Activated naive CD4-positive, alpha-beta T cell treated with anti-CD3 and anti-CD28 coated beads for 36 hours (primary cell): ENCODE measurements at regions of chr11 and their contacts with region 1.

Region 1: DNA sequence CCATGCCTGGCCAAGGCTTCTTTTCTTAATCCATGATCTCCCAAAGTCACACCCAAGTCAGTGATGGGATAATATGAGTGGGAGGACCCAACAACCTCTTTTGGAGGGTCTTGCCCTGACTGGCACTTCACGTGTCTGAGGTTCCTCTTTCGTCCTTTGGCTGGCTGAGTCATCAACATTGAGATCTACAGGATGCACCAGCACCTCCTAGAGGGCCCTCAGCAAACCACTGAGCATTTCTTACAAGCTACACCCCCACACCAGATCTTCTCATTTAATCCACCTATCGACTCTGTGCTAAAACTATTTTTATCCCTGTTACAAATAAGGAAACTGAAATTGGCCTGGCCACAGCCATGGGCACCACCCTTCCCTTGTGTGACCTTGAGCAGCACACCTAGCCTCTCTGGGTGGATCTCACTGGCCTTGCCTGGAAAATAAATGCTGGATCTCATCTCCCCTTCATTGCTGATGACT is 63.4 kb downstream of the FLI1 start:
- DNase-seq: peak; percentile 85
- H3K4me3 Mint-ChIP-seq: peak overlapping the region; percentile 14
- H3K27ac Mint-ChIP-seq: peak overlapping the region; percentile 86
- H3K4me1 Mint-ChIP-seq: peaks cover 74% of the 10 kb centered on the region
- H3K27me3 Mint-ChIP-seq: no peaks in the 10 kb centered on the region

Region 2: GRCh38 chr11:128172046-128172878 is 585.0 kb before region 1 on chr11:
- CTCF ChIA-PET with region 1: interaction called, 6 read pairs
- intact Hi-C with region 1: loop called (anchors 1 kb)
- DNase-seq: peak; percentile 96
- H3K4me3 Mint-ChIP-seq: no peak overlapping the region
- H3K27ac Mint-ChIP-seq: no peak overlapping the region
- H3K4me1 Mint-ChIP-seq: peaks cover 7% of the 10 kb centered on the region
- H3K27me3 Mint-ChIP-seq: no peaks in the 10 kb centered on the region

Region 3: GRCh38 chr11:128506999-128507611 is 250.2 kb before region 1 on chr11:
- CTCF ChIA-PET with region 1: no interaction called
- intact Hi-C with region 1: loop called (anchors 5 kb)
- DNase-seq: peak; percentile 82
- H3K4me3 Mint-ChIP-seq: peak overlapping the region; percentile 77
- H3K27ac Mint-ChIP-seq: peak overlapping the region; percentile 97
- H3K4me1 Mint-ChIP-seq: peaks cover 88% of the 10 kb centered on the region
- H3K27me3 Mint-ChIP-seq: no peaks in the 10 kb centered on the region

Region 4: DNA sequence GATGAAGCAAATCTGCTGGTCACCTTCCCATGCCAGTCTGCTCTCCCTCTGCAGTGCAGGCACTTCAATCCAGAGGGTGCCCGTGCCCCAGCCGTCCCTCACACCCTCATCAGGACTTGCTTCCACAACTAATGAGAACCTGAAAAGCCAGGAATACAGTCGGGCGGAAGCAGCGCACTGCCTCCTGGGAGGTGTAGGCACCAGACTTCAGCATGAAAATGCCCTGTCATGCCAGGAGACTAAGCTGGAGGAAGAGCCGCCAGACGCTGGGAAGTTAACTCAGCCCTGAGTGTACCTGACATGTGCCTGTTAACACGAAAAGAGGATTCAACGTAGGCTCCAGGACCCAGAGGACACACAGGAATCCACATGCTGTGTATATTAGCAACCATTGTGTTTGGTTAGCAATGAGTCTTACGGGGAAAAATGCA is 103.5 kb before region 1 on chr11:
- CTCF ChIA-PET with region 1: no interaction called
- intact Hi-C with region 1: loop called (anchors 5 kb)
- DNase-seq: peak; percentile 8
- H3K4me3 Mint-ChIP-seq: peak overlapping the region; percentile 20
- H3K27ac Mint-ChIP-seq: no peak overlapping the region
- H3K4me1 Mint-ChIP-seq: peaks cover 13% of the 10 kb centered on the region
- H3K27me3 Mint-ChIP-seq: no peaks in the 10 kb centered on the region

Region 5: DNA sequence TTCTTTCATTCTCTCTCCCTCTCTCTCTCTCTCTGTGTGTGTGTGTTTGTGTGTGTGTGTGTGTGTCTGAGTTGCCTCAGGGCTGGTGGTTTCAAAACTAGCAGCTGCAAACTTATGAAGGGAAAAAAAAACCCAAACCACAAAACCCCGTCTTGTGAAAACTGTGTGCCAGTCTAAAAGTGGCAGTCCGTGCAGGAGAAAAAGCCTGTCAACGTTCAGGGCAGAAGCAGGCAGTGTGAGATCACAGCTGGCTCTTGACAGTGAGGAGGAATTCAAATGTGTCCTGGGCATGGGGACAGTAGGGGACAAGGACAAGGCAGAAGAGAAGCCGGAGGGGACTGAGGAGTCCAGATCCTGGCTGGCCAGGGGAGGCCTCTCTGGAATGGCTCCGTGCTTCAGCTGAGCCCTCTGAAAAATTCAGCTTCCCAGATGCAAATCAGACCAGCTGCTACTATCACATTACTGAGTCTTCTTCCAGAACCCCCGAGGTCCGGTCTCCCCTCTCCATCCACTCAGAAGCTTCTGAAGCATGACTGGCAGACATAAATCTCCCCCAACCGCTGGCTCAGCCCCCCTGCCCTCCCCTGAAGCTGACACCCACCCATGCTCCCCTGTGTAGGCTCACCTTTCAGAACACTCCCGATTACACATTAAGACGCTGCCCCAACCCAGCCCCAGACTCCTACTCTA is 31.5 kb before region 1 on chr11:
- CTCF ChIA-PET with region 1: interaction called, 11 read pairs
- intact Hi-C with region 1: loop called (anchors 2 kb)
- DNase-seq: peak; percentile 79
- H3K4me3 Mint-ChIP-seq: peak overlapping the region; percentile 61
- H3K27ac Mint-ChIP-seq: peak overlapping the region; percentile 84
- H3K4me1 Mint-ChIP-seq: peaks cover 98% of the 10 kb centered on the region
- H3K27me3 Mint-ChIP-seq: no peaks in the 10 kb centered on the region

Region 6: DNA sequence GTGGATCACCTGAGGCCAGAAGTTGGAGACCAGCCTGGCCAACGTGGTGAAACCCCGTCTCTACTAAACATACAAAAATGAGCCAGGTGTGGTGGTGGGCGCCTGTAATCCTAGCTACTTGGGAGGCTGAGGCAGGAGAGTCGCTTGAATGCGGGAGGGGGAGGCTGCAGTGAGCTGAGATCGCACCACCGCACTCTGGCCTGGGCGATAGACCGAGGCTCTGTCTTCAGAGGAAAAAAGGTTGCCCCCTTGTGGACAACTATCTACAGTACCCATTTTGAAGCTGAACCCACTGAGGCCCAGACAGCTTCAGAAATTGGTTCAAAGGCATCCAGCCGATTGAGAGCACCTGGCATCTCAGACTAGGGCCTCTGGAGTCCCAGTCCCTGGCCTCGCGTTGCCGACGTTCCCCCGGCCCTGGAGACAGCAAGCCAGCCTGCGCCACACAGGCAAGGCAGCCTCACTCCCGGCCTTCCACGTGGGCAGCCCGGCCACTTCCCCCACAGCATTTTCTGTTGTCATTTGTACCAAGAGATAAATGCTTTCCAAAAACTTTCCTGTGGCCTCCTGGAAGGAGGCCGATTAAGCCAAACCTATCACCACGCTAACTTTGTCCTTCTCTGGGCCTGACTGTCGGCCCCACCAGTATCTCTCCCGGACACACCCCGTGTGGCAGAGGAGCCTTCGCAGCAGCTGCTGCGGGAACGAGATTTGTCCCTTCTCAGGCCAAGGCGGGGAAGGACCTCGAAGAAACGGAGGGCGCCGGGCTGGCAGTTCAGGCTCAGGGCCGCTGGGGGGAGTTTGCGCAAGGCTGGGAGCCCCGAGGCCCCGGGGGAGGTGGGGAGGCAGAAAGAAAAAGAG is 19.4 kb after region 1 on chr11:
- CTCF ChIA-PET with region 1: interaction called, 10 read pairs
- intact Hi-C with region 1: no loop called
- DNase-seq: peak; percentile 35
- H3K4me3 Mint-ChIP-seq: no peak overlapping the region
- H3K27ac Mint-ChIP-seq: no peak overlapping the region
- H3K4me1 Mint-ChIP-seq: peaks cover 44% of the 10 kb centered on the region
- H3K27me3 Mint-ChIP-seq: no peaks in the 10 kb centered on the region